PC-3 (cell line): ENCODE measurements at regions of chr1 and their contacts with region 1.

Region 1: GRCh38 chr1:161045750-161046571 is at the start of gene USF1:
- DNase-seq: peak; percentile 98
- ATAC-seq: peak; percentile 82
- H3K4me3 ChIP-seq: peak within 1 kb of the TSS; percentile 80
- H3K27ac ChIP-seq: peak within 1 kb of the TSS; percentile 82
- H3K4me1 ChIP-seq: peaks cover 13% of the 10 kb centered on the region
- H3K27me3 ChIP-seq: no peaks in the 10 kb centered on the region
- CTCF ChIP-seq: no peak
- total RNA-seq, gene USF1: 111 and 113 TPM in 2 replicates

Region 2: GRCh38 chr1:160997323-160998038 is 48.5 kb before region 1 on chr1:
- CTCF ChIA-PET with region 1: interaction called, 8 read pairs
- POLR2A ChIA-PET with region 1: interaction called, 4 read pairs
- intact Hi-C with region 1: loop called (anchors 1 kb)
- DNase-seq: peak; percentile 74
- ATAC-seq: peak; percentile 73
- H3K4me3 ChIP-seq: no peak overlapping the region
- H3K27ac ChIP-seq: peak overlapping the region; percentile 85
- H3K4me1 ChIP-seq: peaks cover 33% of the 10 kb centered on the region
- H3K27me3 ChIP-seq: no peaks in the 10 kb centered on the region
- CTCF ChIP-seq: peak; percentile 82

Region 3: DNA sequence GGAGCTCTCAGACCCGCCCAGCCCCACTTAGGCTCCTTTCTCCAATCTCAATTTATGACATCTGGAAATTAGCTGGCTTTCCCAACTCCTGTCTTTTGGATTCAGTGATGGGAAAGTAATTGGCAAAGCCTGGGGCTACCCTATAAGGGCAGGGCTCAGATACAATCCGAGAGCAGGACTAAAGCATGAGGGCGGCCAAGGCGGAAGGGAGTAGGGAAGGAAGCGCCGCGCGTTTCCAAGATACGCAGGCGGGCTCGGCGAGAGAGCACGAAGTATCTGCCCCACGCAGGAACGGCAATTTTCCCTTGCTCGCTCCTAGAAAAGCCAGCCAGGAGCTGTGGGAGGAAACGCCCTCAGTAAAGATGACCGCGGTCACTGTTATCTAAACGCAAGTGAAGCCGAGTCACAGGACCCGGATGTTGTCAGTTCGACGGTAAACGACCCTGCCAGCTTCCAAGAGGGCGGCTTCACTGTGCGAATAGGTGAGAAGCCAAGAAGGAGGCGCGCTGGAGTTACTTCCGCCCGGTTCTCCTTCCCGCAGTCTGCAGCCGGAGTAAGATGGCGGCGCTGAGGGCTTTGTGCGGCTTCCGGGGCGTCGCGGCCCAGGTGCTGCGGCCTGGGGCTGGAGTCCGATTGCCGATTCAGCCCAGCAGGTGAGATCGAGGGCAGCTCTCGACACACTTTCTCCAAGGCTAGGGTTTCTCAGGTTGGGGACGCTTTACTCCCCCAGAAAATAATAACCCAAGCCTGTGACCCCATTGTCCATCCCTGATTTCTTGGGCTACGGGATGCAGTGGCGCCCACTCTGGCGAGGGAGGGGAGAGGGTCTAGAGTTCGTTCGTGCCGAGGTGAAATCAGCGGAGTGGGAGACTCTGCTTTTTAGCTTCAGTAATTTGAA is 156.1 kb after region 1 on chr1 and contains the start of gene NDUFS2:
- CTCF ChIA-PET with region 1: no interaction called
- POLR2A ChIA-PET with region 1: no interaction called
- intact Hi-C with region 1: no loop called
- DNase-seq: peak; percentile 99
- ATAC-seq: peak; percentile 96
- H3K4me3 ChIP-seq: peak within 1 kb of the TSS; percentile 81
- H3K27ac ChIP-seq: peak within 1 kb of the TSS; percentile 60
- H3K4me1 ChIP-seq: peaks cover 26% of the 10 kb centered on the region
- H3K27me3 ChIP-seq: no peaks in the 10 kb centered on the region
- CTCF ChIP-seq: peak; percentile 59
- total RNA-seq, gene NDUFS2: 168 TPM in 2 replicates